Head of caudate nucleus (tissue), 42 donors: ENCODE measurements at regions of chrX and their contacts with region 1.

Region 1: DNA sequence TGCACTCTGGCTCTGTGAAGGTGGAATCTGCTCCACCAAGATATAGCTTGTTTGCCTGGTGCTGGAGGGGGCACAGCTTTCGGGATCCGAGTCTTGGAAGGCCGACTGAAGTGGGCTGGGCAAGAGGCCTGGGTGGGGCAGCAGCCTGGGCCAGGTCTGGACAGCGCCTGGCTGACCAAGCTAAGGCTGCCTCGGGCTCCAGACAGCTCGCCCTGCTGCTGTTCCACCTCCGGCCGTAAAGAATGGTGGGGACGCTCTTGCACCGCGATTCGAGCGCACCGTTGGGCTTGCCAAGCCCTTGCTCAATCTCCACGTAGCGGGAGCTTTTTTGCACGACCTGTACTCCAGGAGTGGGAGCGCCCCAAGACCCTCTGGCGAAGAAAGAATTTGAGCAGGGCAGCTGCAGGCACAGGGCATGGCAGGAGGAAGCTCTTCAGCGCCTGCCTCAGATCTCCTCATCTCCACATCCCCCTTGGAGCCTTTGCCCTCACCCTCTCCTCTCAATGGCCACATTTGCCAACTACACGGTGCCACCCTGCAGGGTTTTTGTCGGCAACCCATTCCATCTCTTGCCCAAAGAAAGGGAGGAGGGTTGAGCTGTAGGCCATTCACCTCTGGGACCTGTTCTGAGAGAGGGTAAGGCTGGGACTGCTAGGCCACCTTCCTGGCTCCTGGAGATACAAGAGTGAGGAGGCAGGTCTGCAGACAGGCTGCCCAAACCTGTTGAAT is 18.9 kb downstream of the CNGA2 start:
- DNase-seq: peak in 41 of 42 donors; percentile 33 to 77 (median 55)

Region 2: GRCh38 chrX:151552743-151553142 is 200.7 kb before region 1 on chrX:
- intact Hi-C with region 1: no loop called
- DNase-seq: no peak

Region 3: DNA sequence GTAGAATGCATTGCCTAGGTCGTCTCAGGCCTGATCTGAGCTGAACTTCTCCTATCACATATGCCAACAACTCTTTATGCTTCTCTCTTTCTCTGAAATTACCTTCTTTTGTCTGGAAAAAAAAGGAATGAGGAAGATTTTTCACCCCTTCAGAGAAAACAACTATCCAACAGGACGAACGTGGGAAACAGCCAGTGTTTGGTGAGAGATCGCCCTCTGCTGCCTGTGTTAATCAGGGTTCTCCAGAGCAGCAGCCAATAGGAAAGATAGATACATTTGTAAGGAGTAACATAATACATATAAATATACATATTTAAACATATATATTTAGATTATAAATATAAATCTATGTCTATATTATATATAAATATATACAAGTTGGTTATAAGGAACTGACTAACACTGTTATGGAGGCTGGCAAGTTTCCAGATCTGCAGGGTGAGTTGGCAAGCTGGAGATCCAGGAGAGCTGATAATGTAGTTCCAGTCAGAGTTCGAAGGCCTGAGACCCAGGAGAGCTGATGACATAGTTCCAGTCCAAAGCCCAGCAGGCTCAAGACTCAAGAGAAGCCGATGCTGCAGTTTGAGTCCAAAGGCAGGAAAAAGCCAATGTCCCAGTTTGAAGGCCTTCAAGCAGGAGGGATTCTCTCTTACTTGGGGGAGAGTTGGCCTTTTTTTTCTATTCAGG is 1063.7 kb after region 1 on chrX:
- intact Hi-C with region 1: loop called (anchors 10 kb)
- DNase-seq: peak in 41 of 42 donors; percentile 17 to 74 (median 53)